Heart right ventricle (tissue), 16 donors: ENCODE measurements at regions of chr2 and their contacts with region 1.

Region 1: GRCh38 chr2:45643543-45644542 is 7.6 kb upstream of the PRKCE start:
- DNase-seq: peak; percentile 62 to 79
- ATAC-seq: peak; percentile 95 to 97 (median 96)
- H3K4me3 ChIP-seq: peak overlapping the region; percentile 42 to 69 (median 62)
- H3K27ac ChIP-seq: peak overlapping the region in 2 of 10 donors; percentile 33 to 64
- H3K4me1 ChIP-seq: peaks cover 2 to 22% (median 12%) of the 10 kb centered on the region in 9 donors
- H3K27me3 ChIP-seq: peaks cover 0 to 17% (median 6%) of the 10 kb centered on the region in 7 donors
- CTCF ChIP-seq: peak; percentile 96 to 100 (median 99)

Region 2: DNA sequence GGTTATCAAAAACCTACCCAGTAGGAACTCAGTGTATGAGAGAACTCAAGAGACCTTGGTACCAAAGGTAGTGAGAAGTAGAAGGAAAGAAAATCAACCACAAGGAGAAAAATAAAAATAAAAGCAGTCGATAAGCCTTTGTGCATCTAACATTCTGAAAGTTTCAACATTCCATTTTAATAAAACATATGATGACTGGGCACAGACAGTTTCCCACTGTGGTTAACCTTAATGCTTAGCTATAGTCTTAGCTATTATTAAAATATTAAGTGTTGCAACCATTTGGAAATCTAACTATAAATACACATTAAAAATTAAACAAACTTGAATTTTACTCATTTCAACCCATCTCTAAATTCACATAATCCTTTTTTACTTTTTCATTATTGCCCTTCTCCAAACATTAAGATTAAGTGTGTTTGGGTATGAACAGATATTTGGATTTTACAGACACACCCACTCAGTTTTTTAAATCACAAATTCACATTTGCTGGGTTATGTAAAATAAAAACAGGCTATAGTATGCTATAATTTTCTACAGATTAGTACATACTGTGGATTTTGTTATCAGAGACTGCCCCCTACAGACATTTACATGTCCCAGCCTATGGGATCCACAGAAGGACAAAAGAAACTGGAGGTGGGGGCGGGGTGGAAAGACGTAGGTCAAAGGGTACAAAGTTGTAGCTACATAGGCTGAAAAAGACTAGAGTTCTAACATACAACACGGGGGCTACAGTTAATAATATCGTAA is 65.6 kb before region 1 on chr2:
- intact Hi-C with region 1: no loop called
- DNase-seq: no peak
- ATAC-seq: no peak
- H3K4me3 ChIP-seq: no peak overlapping the region
- H3K27ac ChIP-seq: no peak overlapping the region
- H3K4me1 ChIP-seq: peaks cover 0 to 21% (median 0%) of the 10 kb centered on the region in 9 donors
- H3K27me3 ChIP-seq: no peaks in the 10 kb centered on the region
- CTCF ChIP-seq: peak in 5 of 9 donors; percentile 6 to 45 (median 28)

Region 3: DNA sequence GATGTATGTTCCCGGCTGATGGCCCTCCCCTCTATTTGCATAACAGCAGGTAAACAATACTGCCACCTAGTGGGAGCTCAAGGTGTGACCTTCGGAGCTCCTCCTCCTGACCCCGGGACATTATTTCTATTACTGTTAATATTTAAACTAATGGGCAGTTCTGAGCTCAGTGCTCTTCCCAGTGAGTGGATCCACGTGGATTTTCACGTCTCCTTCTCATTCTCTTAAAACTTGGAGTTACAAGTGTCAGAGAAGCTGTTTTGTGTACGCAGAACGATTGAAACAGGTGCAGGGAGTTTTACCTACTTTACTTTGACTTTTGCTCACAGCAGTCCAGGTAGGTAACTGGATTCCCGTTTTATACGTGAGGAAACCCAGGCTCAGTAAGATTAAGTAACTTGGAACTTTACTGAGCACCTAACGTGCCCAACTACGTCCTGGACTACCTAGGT is 134.9 kb after region 1 on chr2:
- intact Hi-C with region 1: loop called in 8 of 10 experiments (anchors 2 to 5 kb)
- DNase-seq: peak in 1 of 2 donors; percentile 70
- ATAC-seq: peak; percentile 30 to 72 (median 63)
- H3K4me3 ChIP-seq: no peak overlapping the region
- H3K27ac ChIP-seq: no peak overlapping the region
- H3K4me1 ChIP-seq: peaks cover 0 to 71% (median 19%) of the 10 kb centered on the region in 9 donors
- H3K27me3 ChIP-seq: no peaks in the 10 kb centered on the region
- CTCF ChIP-seq: peak; percentile 73 to 87 (median 83)